GM12878 (cell line): ENCODE measurements at regions of chr18 and their contacts with region 1.

Region 1: DNA sequence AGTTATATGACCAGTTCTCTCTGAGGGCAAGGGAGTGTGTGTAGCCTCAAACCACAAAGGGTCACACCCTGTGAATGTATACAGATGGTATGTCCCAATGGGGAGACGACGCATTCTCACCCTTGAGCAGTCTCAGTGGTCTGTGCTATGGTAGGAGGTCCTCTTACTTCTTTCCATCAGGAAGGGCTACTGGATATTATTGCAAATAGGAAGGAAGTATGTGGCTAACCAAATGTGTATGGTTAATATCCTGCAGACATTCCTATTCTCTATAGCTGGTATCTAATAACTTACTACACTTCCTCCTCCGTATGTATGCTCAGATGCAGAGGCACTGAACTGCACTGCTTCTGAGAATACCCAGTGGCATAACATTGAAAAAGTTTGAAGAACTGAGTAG is 306.7 kb upstream of the CCDC68 start:
- DNase-seq: peak; percentile 59
- ATAC-seq: peak; percentile 68
- H3K4me3 ChIP-seq: no peak overlapping the region
- H3K27ac ChIP-seq: peak overlapping the region; percentile 93
- H3K4me1 ChIP-seq: peaks cover 61% of the 10 kb centered on the region
- H3K27me3 ChIP-seq: no peaks in the 10 kb centered on the region
- CTCF ChIP-seq: no peak
- EP300 ChIP-seq: no peak
- POLR2A ChIP-seq: no peak
- RAD21 ChIP-seq: no peak

Region 2: DNA sequence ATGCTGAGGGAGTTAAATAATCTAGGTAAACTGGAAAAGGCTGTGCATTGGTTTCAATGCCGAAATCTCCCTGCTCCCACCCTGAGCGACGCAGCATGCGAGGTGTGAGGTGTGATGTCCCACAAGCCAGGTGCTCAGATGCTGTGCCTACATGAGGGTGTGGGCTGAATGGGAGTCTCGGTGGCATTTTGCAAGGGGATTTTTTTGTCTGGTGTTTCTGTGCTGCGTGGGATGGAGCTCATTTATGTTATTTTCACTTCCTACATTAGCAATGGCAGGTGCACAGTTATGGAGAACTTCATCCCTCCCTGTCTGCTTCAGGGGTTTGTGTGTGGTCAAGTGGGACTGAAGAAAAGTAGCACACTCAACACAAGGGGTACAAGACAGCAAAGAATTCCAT is 196.5 kb before region 1 on chr18:
- CTCF ChIA-PET with region 1: no interaction called
- POLR2A ChIA-PET with region 1: no interaction called
- RAD21 ChIA-PET with region 1: interaction called, 4 read pairs
- SMC1A ChIA-PET with region 1: interaction called, 8 read pairs
- in situ Hi-C with region 1: no loop called
- intact Hi-C with region 1: loop called (anchors 2 kb)
- DNase-seq: peak; percentile 66
- ATAC-seq: peak; percentile 86
- H3K4me3 ChIP-seq: no peak overlapping the region
- H3K27ac ChIP-seq: peak overlapping the region; percentile 39; the same call in 1 of the 2 replicates
- H3K4me1 ChIP-seq: peaks cover 37% of the 10 kb centered on the region
- H3K27me3 ChIP-seq: no peaks in the 10 kb centered on the region
- CTCF ChIP-seq: no peak
- EP300 ChIP-seq: peak; percentile 93 to 95; a peak in 3 of 4 replicates
- POLR2A ChIP-seq: no peak
- RAD21 ChIP-seq: no peak

Region 3: GRCh38 chr18:55251254-55251971 is 14.6 kb before region 1 on chr18:
- CTCF ChIA-PET with region 1: interaction called, 50 read pairs
- POLR2A ChIA-PET with region 1: interaction called, 70 read pairs
- RAD21 ChIA-PET with region 1: interaction called, 93 read pairs
- SMC1A ChIA-PET with region 1: interaction called, 177 read pairs
- in situ Hi-C with region 1: no loop called
- intact Hi-C with region 1: loop called (anchors 1 kb)
- DNase-seq: no peak
- ATAC-seq: peak; percentile 23; the same call in 2 of the 3 replicates
- H3K4me3 ChIP-seq: peak overlapping the region; percentile 37; the same call in 1 of the 2 replicates
- H3K27ac ChIP-seq: peak overlapping the region; percentile 71
- H3K4me1 ChIP-seq: peaks cover 57% of the 10 kb centered on the region
- H3K27me3 ChIP-seq: no peaks in the 10 kb centered on the region
- CTCF ChIP-seq: no peak
- EP300 ChIP-seq: no peak
- POLR2A ChIP-seq: no peak
- RAD21 ChIP-seq: no peak

Region 4: GRCh38 chr18:55287149-55287806 is 21.3 kb after region 1 on chr18:
- CTCF ChIA-PET with region 1: interaction called, 22 read pairs
- POLR2A ChIA-PET with region 1: interaction called, 14 read pairs
- RAD21 ChIA-PET with region 1: interaction called, 50 read pairs
- SMC1A ChIA-PET with region 1: interaction called, 95 read pairs
- in situ Hi-C with region 1: no loop called
- intact Hi-C with region 1: no loop called
- DNase-seq: no peak
- ATAC-seq: no peak
- H3K4me3 ChIP-seq: no peak overlapping the region
- H3K27ac ChIP-seq: no peak overlapping the region
- H3K4me1 ChIP-seq: 0 out of 2 replicates have a peak, but pooled peaks cover 3% of the 10 kb centered on the region
- H3K27me3 ChIP-seq: no peaks in the 10 kb centered on the region
- CTCF ChIP-seq: no peak
- EP300 ChIP-seq: no peak
- POLR2A ChIP-seq: no peak
- RAD21 ChIP-seq: no peak

Region 5: GRCh38 chr18:55307505-55307904 is 41.5 kb after region 1 on chr18:
- CTCF ChIA-PET with region 1: interaction called, 30 read pairs
- POLR2A ChIA-PET with region 1: interaction called, 15 read pairs
- RAD21 ChIA-PET with region 1: interaction called, 50 read pairs
- SMC1A ChIA-PET with region 1: interaction called, 55 read pairs
- in situ Hi-C with region 1: no loop called
- intact Hi-C with region 1: no loop called
- DNase-seq: no peak
- ATAC-seq: peak; percentile 45
- H3K4me3 ChIP-seq: peak overlapping the region; percentile 29; the same call in 1 of the 2 replicates
- H3K27ac ChIP-seq: peak overlapping the region; percentile 43
- H3K4me1 ChIP-seq: peaks cover 13% of the 10 kb centered on the region; the same call in 1 of the 2 replicates
- H3K27me3 ChIP-seq: no peaks in the 10 kb centered on the region
- CTCF ChIP-seq: no peak
- EP300 ChIP-seq: no peak
- POLR2A ChIP-seq: no peak
- RAD21 ChIP-seq: no peak